GM10248 (cell line): ENCODE measurements at regions of chr2 and their contacts with region 1.

Region 1: DNA sequence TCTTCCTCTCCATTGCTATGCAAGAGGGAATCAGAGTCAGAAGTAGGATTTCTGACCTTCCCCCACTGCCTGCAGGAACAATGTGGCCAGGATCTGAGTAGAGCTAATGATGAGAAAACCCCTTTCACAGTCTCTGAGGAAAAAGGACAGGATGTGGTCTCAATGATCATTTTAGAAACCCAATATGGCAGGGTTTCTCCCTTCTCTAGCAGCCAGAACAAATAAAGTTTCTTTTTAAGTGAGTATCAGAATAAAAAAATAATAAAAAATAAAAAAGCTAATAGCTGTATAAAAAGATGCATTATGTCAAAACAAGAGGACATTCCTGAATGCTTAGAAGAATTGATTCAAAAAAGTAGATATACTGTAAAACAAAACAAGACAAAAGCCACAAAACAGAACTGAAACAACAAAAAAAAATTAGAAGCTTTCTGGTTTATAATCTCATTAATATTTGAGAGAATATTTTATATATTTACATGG is 1124.9 kb upstream of the ZEB2 start:
- DNase-seq: peak; percentile 19
- CTCF ChIP-seq: no peak

Region 2: GRCh38 chr2:145631561-145631960 is 13.3 kb before region 1 on chr2:
- CTCF ChIA-PET with region 1: interaction called, 10 read pairs
- POLR2A ChIA-PET with region 1: no interaction called
- DNase-seq: no peak
- CTCF ChIP-seq: no peak